Right ventricle myocardium inferior (tissue), 1 donor: ENCODE measurements at regions of chr1 and their contacts with region 1.

Region 1: DNA sequence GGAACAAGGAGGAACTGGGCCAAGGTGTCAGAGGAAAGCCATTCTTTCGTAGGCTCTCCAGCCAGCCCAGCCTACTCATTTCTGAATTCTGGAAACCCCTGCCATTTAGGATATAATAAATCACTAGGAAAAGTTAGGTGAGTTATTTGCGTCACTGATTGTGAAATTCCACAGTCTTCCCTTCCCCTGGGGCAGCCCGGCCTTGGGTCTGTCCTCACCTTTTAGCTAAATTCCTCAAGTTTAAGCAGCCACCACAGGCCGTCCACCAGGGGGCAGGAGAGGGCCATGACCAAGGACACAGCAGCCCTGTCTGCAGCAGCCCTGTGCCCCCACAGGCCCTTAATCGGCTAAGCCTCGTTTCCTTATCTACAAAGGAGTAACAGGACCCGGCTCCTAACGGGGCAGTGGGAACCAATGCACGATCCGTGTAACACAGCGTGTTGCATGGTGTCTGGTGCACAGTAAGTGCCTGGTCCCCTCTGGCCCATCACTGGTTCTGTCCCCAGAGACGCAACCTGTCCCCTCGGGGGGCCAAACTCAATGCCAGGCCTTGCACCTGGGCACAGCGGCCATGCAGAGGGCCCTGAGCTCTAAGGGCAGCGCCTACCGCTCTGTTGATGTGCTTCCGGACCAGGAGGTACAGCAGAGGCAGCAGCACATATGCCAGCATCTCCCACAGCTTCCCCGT is 18.1 kb downstream of the GPR157 start:
- DNase-seq: peak; percentile 95
- ATAC-seq: peak; percentile 75

Region 2: DNA sequence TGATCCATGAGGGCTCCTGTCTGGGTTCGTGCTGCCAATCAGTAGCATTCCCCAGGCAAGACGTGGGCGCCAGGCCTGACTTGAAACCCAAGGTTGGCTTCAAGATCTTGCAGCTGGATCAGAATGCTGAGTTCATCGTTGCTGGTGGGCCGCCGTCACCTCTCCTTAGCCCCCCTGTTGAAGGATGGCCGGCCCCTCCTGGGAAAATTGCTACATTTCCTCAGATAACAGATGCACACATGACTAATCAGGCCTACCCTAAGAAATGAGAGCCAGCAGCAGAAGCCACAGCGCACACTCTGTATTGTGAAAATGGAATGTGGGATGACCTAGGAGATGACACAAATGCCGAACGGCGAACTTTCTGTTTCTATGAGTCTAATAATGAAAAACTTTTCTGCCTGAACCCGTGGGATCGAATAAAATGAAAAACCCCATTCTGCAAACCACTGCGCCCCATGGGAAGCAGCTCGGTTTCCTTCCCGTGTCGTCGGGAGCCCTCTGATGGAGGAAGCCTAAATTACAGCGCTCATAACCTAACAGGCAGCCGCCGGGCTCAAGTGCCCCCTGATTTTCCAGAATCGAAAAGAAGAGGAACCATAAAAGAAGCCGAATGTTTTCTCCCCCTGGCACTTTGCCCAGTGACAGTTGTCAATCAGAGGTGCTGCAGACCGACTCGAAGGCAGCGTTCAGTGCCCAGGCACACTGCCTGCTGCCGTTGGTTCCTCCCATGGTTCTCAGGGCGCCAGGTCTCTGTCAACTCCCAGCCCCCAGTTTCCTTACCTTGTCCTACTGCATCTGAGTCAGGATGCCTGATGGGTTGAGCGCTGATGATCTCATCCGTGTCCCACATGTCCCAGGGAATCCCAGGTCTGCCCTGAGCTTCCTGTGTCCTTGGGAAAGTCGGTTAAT is 85.6 kb after region 1 on chr1:
- intact Hi-C with region 1: loop called (anchors 1 kb)
- DNase-seq: peak; percentile 83
- ATAC-seq: peak; percentile 73

Region 3: GRCh38 chr1:9362488-9362887 is 251.7 kb after region 1 on chr1:
- intact Hi-C with region 1: no loop called
- DNase-seq: no peak
- ATAC-seq: no peak